A549 (cell line): ENCODE measurements at regions of chr6 and their contacts with region 1.

Region 1: GRCh38 chr6:24581084-24581669 is 64.8 kb downstream of the KIAA0319 start:
- DNase-seq: peak; percentile 30 to 60
- ATAC-seq: peak; percentile 92 to 97
- H3K4me3 ChIP-seq: no peak overlapping the region
- H3K27ac ChIP-seq: no peak overlapping the region
- H3K4me1 ChIP-seq: peaks cover 5% of the 10 kb centered on the region; the same call in 2 of the 3 replicates
- CTCF ChIP-seq: peak; percentile 63
- EP300 ChIP-seq: no peak
- POLR2A ChIP-seq: no peak
- RAD21 ChIP-seq: peak; percentile 70 to 73

Region 2: GRCh38 chr6:24415753-24416152 is 165.4 kb before region 1 on chr6:
- CTCF ChIA-PET with region 1: no interaction called
- POLR2A ChIA-PET with region 1: no interaction called
- DNase-seq: no peak
- ATAC-seq: no peak
- H3K4me3 ChIP-seq: no peak overlapping the region
- H3K27ac ChIP-seq: no peak overlapping the region
- H3K4me1 ChIP-seq: no peaks in the 10 kb centered on the region
- CTCF ChIP-seq: no peak
- EP300 ChIP-seq: no peak
- POLR2A ChIP-seq: no peak
- RAD21 ChIP-seq: no peak

Region 3: GRCh38 chr6:24566020-24566767 is 15.0 kb before region 1 on chr6:
- CTCF ChIA-PET with region 1: interaction called, 26 read pairs
- POLR2A ChIA-PET with region 1: no interaction called
- DNase-seq: no peak
- ATAC-seq: no peak
- H3K4me3 ChIP-seq: no peak overlapping the region
- H3K27ac ChIP-seq: no peak overlapping the region
- H3K4me1 ChIP-seq: no peaks in the 10 kb centered on the region
- CTCF ChIP-seq: no peak
- EP300 ChIP-seq: no peak
- POLR2A ChIP-seq: no peak
- RAD21 ChIP-seq: no peak

Region 4: GRCh38 chr6:24666641-24667377 is 85.6 kb after region 1 on chr6 and contains the starts of genes ACOT13 and TDP2:
- CTCF ChIA-PET with region 1: interaction called, 15 read pairs
- POLR2A ChIA-PET with region 1: interaction called, 6 read pairs
- DNase-seq: peak; percentile 83 to 95
- ATAC-seq: peak; percentile 88 to 91
- H3K4me3 ChIP-seq: peak within 1 kb of the TSS; percentile 92
- H3K27ac ChIP-seq: peak within 1 kb of the TSS; percentile 96 to 99
- H3K4me1 ChIP-seq: peaks cover 43% of the 10 kb centered on the region
- CTCF ChIP-seq: no peak; the same call in 2 of the 3 replicates
- EP300 ChIP-seq: no peak
- POLR2A ChIP-seq: peak; percentile 81
- RAD21 ChIP-seq: peak; percentile 12 to 37; a peak in 3 of 5 replicates
- polyA plus RNA-seq, gene ACOT13: 77.7 and 87.7 TPM in 2 replicates
- polyA plus RNA-seq, gene TDP2: 69.7 and 91.7 TPM in 2 replicates

Region 5: GRCh38 chr6:24692848-24693592 is 111.8 kb after region 1 on chr6:
- CTCF ChIA-PET with region 1: interaction called, 32 read pairs
- POLR2A ChIA-PET with region 1: no interaction called
- DNase-seq: no peak
- ATAC-seq: no peak
- H3K4me3 ChIP-seq: no peak overlapping the region
- H3K27ac ChIP-seq: no peak overlapping the region
- H3K4me1 ChIP-seq: peaks cover 4% of the 10 kb centered on the region; the same call in 1 of the 3 replicates
- CTCF ChIP-seq: no peak
- EP300 ChIP-seq: no peak
- POLR2A ChIP-seq: no peak
- RAD21 ChIP-seq: no peak

Region 6: GRCh38 chr6:24761193-24761835 is 180.1 kb after region 1 on chr6:
- CTCF ChIA-PET with region 1: interaction called, 16 read pairs
- POLR2A ChIA-PET with region 1: interaction called, 3 read pairs
- DNase-seq: no peak
- ATAC-seq: peak; percentile 74 to 92; a peak in 5 of 6 replicates
- H3K4me3 ChIP-seq: no peak overlapping the region
- H3K27ac ChIP-seq: no peak overlapping the region
- H3K4me1 ChIP-seq: no peaks in the 10 kb centered on the region
- CTCF ChIP-seq: no peak
- EP300 ChIP-seq: no peak
- POLR2A ChIP-seq: no peak
- RAD21 ChIP-seq: no peak